Right ventricle myocardium superior (tissue), 1 donor: ENCODE measurements at regions of chr15 and their contacts with region 1.

Region 1: GRCh38 chr15:58980351-58980939 is 7.0 kb upstream of the RNF111 start:
- DNase-seq: no peak
- ATAC-seq: peak; percentile 55

Region 2: GRCh38 chr15:59158701-59159034 is 178.2 kb after region 1 on chr15:
- intact Hi-C with region 1: loop called (anchors 10 kb)
- DNase-seq: no peak
- ATAC-seq: no peak